ENCODE measurements at regions of chr15 and their contacts with region 1.

Region 1: GRCh38 chr15:51649659-51650521 is 27.3 kb upstream of the DMXL2 start:
- DNase-seq: peak; percentile 64
- CTCF ChIP-seq: peak; percentile 68

Region 2: DNA sequence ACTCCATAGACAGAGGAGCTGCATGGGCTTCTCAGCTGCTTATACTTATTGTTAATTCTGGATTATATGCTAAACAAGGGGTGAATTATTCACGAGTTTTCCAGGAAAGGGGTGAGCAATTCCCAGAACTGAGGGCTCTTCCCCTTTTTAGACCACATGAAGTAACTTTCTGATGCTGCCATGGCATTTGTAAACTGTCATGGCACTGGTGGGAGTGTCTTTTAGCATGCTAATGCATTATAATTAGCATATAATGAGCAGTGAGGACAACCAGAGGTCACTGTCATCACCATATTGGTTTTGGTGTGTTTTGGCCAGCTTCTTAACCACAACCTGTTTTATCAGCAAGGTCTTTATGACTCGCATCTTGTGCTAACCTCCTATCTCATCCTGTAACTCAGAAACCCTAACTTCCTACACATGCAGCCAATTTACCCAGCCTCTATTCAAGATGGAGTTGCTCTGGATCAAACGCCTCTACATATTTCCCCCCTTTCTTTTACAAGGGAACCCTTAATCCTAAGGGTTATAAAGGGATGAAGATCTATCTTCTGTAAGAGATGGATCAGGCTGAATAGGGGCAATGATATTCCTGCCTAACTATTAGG is 15.2 kb before region 1 on chr15:
- CTCF ChIA-PET with region 1: interaction called, 11 read pairs
- POLR2A ChIA-PET with region 1: no interaction called
- DNase-seq: no peak
- CTCF ChIP-seq: no peak

Region 3: GRCh38 chr15:51737280-51738017 is 87.6 kb after region 1 on chr15 and contains the start of gene LYSMD2:
- CTCF ChIA-PET with region 1: interaction called, 15 read pairs
- POLR2A ChIA-PET with region 1: no interaction called
- DNase-seq: peak; percentile 74
- CTCF ChIP-seq: no peak

Region 4: GRCh38 chr15:51768018-51768417 is 118.1 kb after region 1 on chr15:
- CTCF ChIA-PET with region 1: interaction called, 168 read pairs
- POLR2A ChIA-PET with region 1: no interaction called
- DNase-seq: no peak
- CTCF ChIP-seq: no peak

Region 5: GRCh38 chr15:52039925-52040781 is 390.3 kb after region 1 on chr15:
- CTCF ChIA-PET with region 1: no interaction called
- POLR2A ChIA-PET with region 1: no interaction called
- DNase-seq: no peak
- CTCF ChIP-seq: no peak

Measured in GM10248 (cell line).